A549 (cell line): ENCODE measurements at regions of chr15 and their contacts with region 1.

Region 1: DNA sequence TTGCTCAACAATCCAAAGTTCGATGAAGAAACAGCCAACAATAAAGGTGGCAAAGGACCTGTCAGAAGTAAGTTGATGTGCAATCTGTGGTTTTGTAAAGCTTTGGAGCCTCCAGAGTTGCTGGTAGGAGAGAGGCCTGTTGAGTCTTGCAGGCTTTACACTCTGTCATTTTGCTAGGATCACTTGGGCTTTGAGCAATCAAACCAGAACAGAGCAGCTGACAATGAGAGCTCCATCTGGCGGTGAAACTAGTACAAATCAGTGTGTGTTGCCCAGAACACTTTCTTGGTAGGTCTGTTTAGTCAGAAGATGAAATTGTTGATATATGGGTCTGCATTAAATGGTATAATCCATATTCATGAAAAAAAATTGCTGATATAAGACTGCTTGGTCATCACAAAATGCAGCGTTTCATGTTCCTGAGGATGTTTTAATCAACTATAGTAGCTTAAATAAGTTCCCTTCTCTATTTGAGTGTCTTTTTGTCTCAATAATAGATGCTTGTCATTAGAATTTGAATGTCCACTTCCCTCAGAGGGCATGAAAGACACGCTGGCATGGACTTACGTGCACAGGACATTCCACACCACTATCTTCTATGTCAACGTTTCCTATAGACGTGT is 25.7 kb downstream of the TMOD2 start:
- DNase-seq: peak; percentile 88
- ATAC-seq: peak; percentile 93 to 97
- H3K4me3 ChIP-seq: no peak overlapping the region
- H3K27ac ChIP-seq: no peak overlapping the region
- H3K4me1 ChIP-seq: peaks cover 13% of the 10 kb centered on the region; the same call in 2 of the 3 replicates
- CTCF ChIP-seq: peak; percentile 92
- EP300 ChIP-seq: no peak
- POLR2A ChIP-seq: no peak
- RAD21 ChIP-seq: peak; percentile 70 to 78

Region 2: GRCh38 chr15:51629612-51630011 is 147.5 kb before region 1 on chr15:
- CTCF ChIA-PET with region 1: interaction called, 26 read pairs
- POLR2A ChIA-PET with region 1: no interaction called
- DNase-seq: no peak
- ATAC-seq: no peak; a peak in 1 of 6 replicates
- H3K4me3 ChIP-seq: no peak overlapping the region
- H3K27ac ChIP-seq: no peak overlapping the region
- H3K4me1 ChIP-seq: no peaks in the 10 kb centered on the region
- CTCF ChIP-seq: no peak
- EP300 ChIP-seq: no peak
- POLR2A ChIP-seq: no peak
- RAD21 ChIP-seq: no peak

Region 3: GRCh38 chr15:51681303-51681963 is 95.6 kb before region 1 on chr15 and contains the start of gene SCG3:
- CTCF ChIA-PET with region 1: interaction called, 20 read pairs
- POLR2A ChIA-PET with region 1: no interaction called
- DNase-seq: peak; percentile 25 to 74
- ATAC-seq: peak; percentile 93 to 95
- H3K4me3 ChIP-seq: peak within 1 kb of the TSS; percentile 23; the same call in 1 of the 3 replicates
- H3K27ac ChIP-seq: no peak within 1 kb of the TSS
- H3K4me1 ChIP-seq: no peaks in the 10 kb centered on the region; the same call in 2 of the 3 replicates
- CTCF ChIP-seq: no peak
- EP300 ChIP-seq: no peak
- POLR2A ChIP-seq: no peak
- RAD21 ChIP-seq: no peak
- polyA plus RNA-seq, gene SCG3: 0.03 TPM in 1 of 2 replicates, not detected in the other

Region 4: GRCh38 chr15:51737280-51738017 is 39.6 kb before region 1 on chr15 and contains the start of gene LYSMD2:
- CTCF ChIA-PET with region 1: interaction called, 73 read pairs
- POLR2A ChIA-PET with region 1: interaction called, 17 read pairs
- DNase-seq: peak; percentile 54 to 59
- ATAC-seq: peak; percentile 85 to 86
- H3K4me3 ChIP-seq: peak within 1 kb of the TSS; percentile 68
- H3K27ac ChIP-seq: peak within 1 kb of the TSS; percentile 86 to 91
- H3K4me1 ChIP-seq: peaks cover 16% of the 10 kb centered on the region
- CTCF ChIP-seq: no peak
- EP300 ChIP-seq: no peak
- POLR2A ChIP-seq: peak; percentile 56
- RAD21 ChIP-seq: no peak
- polyA plus RNA-seq, gene LYSMD2: 29.2 and 32.1 TPM in 2 replicates

Region 5: GRCh38 chr15:51829360-51830275 is 52.6 kb after region 1 on chr15 and contains the start of gene TMOD3:
- CTCF ChIA-PET with region 1: interaction called, 24 read pairs
- POLR2A ChIA-PET with region 1: no interaction called
- DNase-seq: peak; percentile 95
- ATAC-seq: peak; percentile 91 to 96
- H3K4me3 ChIP-seq: peak within 1 kb of the TSS; percentile 70
- H3K27ac ChIP-seq: peak within 1 kb of the TSS; percentile 96 to 99
- H3K4me1 ChIP-seq: peaks cover 47% of the 10 kb centered on the region
- CTCF ChIP-seq: no peak
- EP300 ChIP-seq: no peak
- POLR2A ChIP-seq: peak; percentile 95
- RAD21 ChIP-seq: peak in 1 of 2 experiments; percentile 41; a peak in 3 of 5 replicates
- polyA plus RNA-seq, gene TMOD3: 93.2 and 111 TPM in 2 replicates

Region 6: DNA sequence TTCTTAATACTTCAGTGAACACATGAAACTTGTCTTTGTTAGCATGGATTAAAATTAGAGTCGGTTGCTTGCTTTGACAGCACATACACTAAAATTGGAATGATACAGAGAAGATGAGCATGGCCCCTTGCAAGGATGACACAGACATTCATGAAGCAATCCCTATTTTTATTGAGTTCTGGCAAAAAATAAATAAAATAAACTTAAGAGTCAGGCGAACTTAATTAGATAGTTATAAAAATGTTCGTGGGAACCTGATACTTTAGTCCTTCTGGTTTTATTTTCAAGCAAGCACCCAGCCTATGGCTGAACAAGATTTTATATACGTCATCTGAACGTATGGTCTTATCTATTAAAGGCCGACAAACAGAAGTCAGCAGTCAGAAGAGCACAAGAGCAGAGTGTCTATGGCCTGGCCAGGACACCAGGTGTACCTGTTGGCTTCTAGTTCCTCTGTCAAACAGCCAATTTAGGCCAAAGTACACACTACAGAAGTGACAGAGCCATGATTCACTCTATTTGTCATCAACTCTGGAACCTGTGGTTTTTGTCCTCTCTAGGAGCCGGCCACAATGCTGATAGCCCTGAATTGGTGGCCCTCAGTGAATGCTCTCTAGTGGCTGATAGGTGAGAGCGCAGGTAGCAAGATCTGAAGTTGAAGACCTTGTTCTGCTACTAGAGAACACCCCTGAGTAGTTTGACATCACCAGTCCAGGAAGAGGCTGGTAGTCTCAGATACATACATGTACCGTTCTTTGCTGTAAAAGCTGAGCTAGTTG is 130.3 kb after region 1 on chr15:
- CTCF ChIA-PET with region 1: interaction called, 18 read pairs
- POLR2A ChIA-PET with region 1: no interaction called
- DNase-seq: peak; percentile 39 to 69
- ATAC-seq: peak; percentile 73 to 91
- H3K4me3 ChIP-seq: no peak overlapping the region
- H3K27ac ChIP-seq: peak overlapping the region in 1 of 2 experiments; percentile 47; a peak in 4 of 6 replicates
- H3K4me1 ChIP-seq: peaks cover 53% of the 10 kb centered on the region
- CTCF ChIP-seq: peak; percentile 22; the same call in 1 of the 3 replicates
- EP300 ChIP-seq: no peak
- POLR2A ChIP-seq: no peak
- RAD21 ChIP-seq: peak; percentile 41 to 42; a peak in 4 of 5 replicates

Region 7: GRCh38 chr15:52208306-52208946 is 431.4 kb after region 1 on chr15:
- CTCF ChIA-PET with region 1: no interaction called
- POLR2A ChIA-PET with region 1: no interaction called
- DNase-seq: peak; percentile 81
- ATAC-seq: peak; percentile 91 to 98
- H3K4me3 ChIP-seq: no peak overlapping the region
- H3K27ac ChIP-seq: no peak overlapping the region
- H3K4me1 ChIP-seq: no peaks in the 10 kb centered on the region
- CTCF ChIP-seq: peak; percentile 86
- EP300 ChIP-seq: no peak
- POLR2A ChIP-seq: no peak
- RAD21 ChIP-seq: peak; percentile 62 to 78